K562 (cell line): ENCODE measurements at regions of chr5 and their contacts with region 1.

Region 1: DNA sequence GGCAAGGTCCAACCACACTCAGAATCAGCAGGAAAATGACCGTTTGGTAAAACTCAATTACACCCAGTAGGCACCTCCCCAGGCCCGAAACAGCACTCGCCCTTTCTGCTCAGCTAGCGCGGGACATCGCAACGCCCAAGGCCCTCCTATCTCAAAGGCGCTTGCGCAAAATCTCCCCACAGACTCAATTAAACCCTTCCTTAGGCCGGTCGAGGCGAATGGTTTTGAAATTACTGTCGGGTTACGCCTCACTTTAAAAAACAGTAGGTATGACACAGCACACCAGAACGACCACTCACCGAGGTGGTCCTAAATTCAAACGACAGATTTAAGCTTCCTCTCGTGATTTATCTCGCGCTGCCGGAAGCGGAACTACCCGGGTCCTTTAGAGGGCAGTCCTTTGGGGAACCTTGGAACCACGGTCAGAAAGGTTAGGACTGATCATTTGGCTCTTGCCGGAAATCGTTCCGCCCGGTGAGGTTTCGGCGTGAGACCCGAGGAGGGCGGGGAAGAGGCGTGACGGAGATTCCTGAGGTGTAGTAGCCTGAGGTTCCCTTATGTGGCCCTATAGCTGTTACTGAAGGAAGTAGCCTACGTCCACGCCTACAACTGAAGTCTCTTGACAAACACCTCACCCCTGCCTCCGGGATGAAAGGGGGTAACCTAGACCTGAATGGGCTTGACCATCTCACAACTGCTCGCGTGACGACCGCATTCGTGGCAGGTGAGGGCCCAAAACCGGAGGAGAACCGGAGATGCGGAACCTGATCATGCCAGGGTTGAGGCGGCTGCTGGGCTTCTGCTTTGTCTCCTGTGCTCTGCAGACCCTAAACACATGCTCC is at the starts of genes GIN1 and PPIP5K2:
- DNase-seq: peak; percentile 86 to 98 (median 88)
- ATAC-seq: peak; percentile 87
- H3K4me3 ChIP-seq: peak within 1 kb of the TSS; percentile 60
- H3K27ac ChIP-seq: peak within 1 kb of the TSS; percentile 99
- H3K4me1 ChIP-seq: peaks cover 0 to 14% of the 10 kb centered on the region in 2 experiments; a peak in 3 of 5 replicates
- H3K27me3 ChIP-seq: no peaks in the 10 kb centered on the region
- CTCF ChIP-seq: no peak
- EP300 ChIP-seq: peak; percentile 71
- POLR2A ChIP-seq: peak; percentile 94
- RAD21 ChIP-seq: no peak
- polyA plus RNA-seq, gene GIN1: 9.2 TPM
- polyA plus RNA-seq, gene PPIP5K2: 66.1 to 76.5 TPM

Region 2: DNA sequence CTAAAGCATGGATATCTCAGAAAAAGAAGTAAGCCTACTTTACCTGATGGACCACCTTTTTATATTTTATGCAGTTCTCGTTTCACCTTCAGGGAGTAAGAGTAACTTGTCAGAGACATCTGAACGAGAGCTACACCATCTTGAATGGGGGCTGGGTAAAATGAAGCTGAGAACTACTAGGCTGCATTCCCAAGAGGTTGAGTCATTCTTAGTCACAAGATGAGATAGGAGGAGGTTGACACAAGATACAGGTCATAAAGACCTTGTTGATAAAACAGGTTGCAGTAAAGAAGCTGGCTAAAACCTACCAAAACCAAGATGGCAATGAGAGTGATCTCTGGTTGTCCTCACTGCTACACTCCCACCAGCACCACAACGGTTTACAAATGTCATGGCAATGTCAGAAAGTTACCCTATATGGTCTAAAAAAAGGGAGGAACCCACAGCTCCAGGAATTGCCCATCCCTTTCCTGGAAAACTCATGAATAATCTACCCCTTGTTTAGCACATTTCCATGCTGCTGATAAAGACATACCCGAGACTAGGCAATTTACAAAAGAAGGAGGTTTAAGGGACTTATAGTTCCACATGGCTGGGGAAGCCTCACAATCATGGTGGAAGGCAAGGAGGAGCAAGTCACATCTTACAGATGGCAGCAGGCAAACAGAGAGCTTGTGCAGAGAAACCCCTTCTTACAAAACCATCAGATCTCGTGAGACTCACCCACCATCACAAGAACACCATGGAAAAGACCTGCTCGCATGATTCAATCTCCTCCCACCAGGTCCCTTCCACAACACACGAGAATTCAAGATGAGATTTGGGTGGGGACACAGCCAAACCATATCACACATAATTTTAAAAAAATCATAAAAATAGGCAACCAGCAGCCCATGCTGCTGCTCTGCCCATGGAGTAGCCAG is 62.5 kb before region 1 on chr5:
- CTCF ChIA-PET with region 1: no interaction called
- POLR2A ChIA-PET with region 1: no interaction called
- in situ Hi-C with region 1: no loop called
- intact Hi-C with region 1: loop called (anchors 5 kb)
- DNase-seq: peak in 1 of 4 experiments; percentile 66
- ATAC-seq: peak; percentile 83
- H3K4me3 ChIP-seq: no peak overlapping the region
- H3K27ac ChIP-seq: peak overlapping the region; percentile 58; the same call in 2 of the 3 replicates
- H3K4me1 ChIP-seq: peaks cover 0 to 6% of the 10 kb centered on the region in 2 experiments; a peak in 2 of 5 replicates
- H3K27me3 ChIP-seq: no peaks in the 10 kb centered on the region
- CTCF ChIP-seq: no peak
- EP300 ChIP-seq: 0 out of 2 replicates have a peak, but pooled peaks have one; percentile 28
- POLR2A ChIP-seq: no peak
- RAD21 ChIP-seq: 0 out of 4 replicates have a peak, but pooled peaks of 1 of the 2 experiments have one; percentile 13

Region 3: DNA sequence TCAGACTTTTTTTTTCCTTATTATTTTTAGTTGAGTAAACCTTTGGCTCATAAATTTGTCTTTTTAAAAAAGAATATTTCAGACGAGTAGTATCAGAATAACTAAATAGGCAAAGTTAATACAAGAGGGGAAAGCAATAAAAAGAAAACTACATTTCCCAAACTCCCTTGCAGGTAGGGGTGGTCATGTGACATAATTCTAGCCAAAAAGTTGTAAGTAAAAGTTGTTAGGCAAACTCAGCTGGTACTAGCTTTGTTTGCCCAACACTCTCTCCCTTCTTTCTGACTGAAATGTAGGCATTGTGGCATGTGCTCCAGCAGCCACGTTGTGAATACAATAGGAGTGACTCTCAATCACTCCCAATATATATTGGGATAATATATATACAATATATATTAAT is 21.0 kb before region 1 on chr5:
- CTCF ChIA-PET with region 1: no interaction called
- POLR2A ChIA-PET with region 1: interaction called, 10 read pairs
- in situ Hi-C with region 1: no loop called
- intact Hi-C with region 1: no loop called
- DNase-seq: peak in 2 of 4 experiments; percentile 34 to 38
- ATAC-seq: no peak
- H3K4me3 ChIP-seq: no peak overlapping the region
- H3K27ac ChIP-seq: no peak overlapping the region
- H3K4me1 ChIP-seq: peaks cover 0 to 11% of the 10 kb centered on the region in 2 experiments; a peak in 2 of 5 replicates
- H3K27me3 ChIP-seq: no peaks in the 10 kb centered on the region
- CTCF ChIP-seq: no peak
- EP300 ChIP-seq: no peak
- POLR2A ChIP-seq: no peak
- RAD21 ChIP-seq: no peak

Region 4: DNA sequence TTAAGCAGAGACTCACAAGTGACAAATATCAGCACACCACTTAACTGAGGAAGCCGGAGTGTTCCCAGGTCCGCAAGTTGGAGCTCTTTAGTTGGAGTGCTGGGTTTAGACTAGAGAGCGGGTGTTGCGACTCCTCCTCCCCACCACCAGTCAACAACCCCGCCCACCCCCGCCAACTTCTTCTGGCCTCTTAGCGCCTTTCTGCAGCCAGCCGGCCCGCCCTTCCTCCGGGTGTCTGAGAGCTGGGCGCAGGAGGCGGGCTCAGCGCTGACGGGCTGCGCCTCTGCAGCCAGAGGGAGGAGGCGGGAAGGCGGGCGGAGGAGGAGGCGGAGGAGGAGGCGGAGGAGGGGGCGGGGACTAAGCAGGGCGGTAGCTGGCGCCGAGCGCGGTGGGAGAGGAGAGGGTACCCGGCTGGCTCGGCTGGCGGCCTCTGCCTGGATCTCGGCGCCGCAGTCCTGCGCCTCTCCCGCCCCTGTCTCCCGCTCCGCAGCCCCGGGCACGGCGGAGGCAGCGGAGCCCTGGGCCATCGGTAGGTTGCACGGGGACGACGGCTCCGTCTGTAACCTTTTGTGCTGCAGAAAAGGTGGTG is 138.5 kb after region 1 on chr5 and contains the start of gene MACIR:
- CTCF ChIA-PET with region 1: no interaction called
- POLR2A ChIA-PET with region 1: no interaction called
- in situ Hi-C with region 1: no loop called
- intact Hi-C with region 1: loop called (anchors 2 kb)
- DNase-seq: peak; percentile 88 to 99 (median 92)
- ATAC-seq: peak; percentile 91
- H3K4me3 ChIP-seq: peak within 1 kb of the TSS; percentile 86
- H3K27ac ChIP-seq: peak within 1 kb of the TSS; percentile 83
- H3K4me1 ChIP-seq: peaks cover 12 to 27% of the 10 kb centered on the region in 2 experiments; a peak in 4 of 5 replicates
- H3K27me3 ChIP-seq: no peaks in the 10 kb centered on the region
- CTCF ChIP-seq: peak in 2 of 3 experiments; percentile 8 to 24; a peak in 2 of 6 replicates
- EP300 ChIP-seq: no peak
- POLR2A ChIP-seq: peak; percentile 82
- RAD21 ChIP-seq: 0 out of 4 replicates have a peak, but pooled peaks of 1 of the 2 experiments have one; percentile 9
- polyA plus RNA-seq, gene MACIR: 1.4 to 2.7 TPM

Region 5: GRCh38 chr5:104088876-104089778 is 969.1 kb after region 1 on chr5:
- CTCF ChIA-PET with region 1: no interaction called
- POLR2A ChIA-PET with region 1: no interaction called
- in situ Hi-C with region 1: no loop called
- intact Hi-C with region 1: loop called (anchors 10 kb)
- DNase-seq: peak in 2 of 4 experiments; percentile 59 to 81
- ATAC-seq: peak; percentile 91
- H3K4me3 ChIP-seq: peak overlapping the region; percentile 14
- H3K27ac ChIP-seq: peak overlapping the region; percentile 92
- H3K4me1 ChIP-seq: peaks cover 0 to 12% of the 10 kb centered on the region in 2 experiments; a peak in 2 of 5 replicates
- H3K27me3 ChIP-seq: no peaks in the 10 kb centered on the region
- CTCF ChIP-seq: no peak
- EP300 ChIP-seq: peak; percentile 78
- POLR2A ChIP-seq: no peak
- RAD21 ChIP-seq: no peak